ENCODE measurements at regions of chr10 and their contacts with region 1.

Region 1: GRCh38 chr10:31864834-31865518 is 63.7 kb downstream of the ARHGAP12 start:
- DNase-seq: no peak
- ATAC-seq: no peak
- H3K4me3 Mint-ChIP-seq: no peak overlapping the region
- H3K27ac Mint-ChIP-seq: no peak overlapping the region
- H3K4me1 Mint-ChIP-seq: peaks cover 27% of the 10 kb centered on the region
- H3K27me3 Mint-ChIP-seq: no peaks in the 10 kb centered on the region
- CTCF ChIP-seq: no peak

Region 2: DNA sequence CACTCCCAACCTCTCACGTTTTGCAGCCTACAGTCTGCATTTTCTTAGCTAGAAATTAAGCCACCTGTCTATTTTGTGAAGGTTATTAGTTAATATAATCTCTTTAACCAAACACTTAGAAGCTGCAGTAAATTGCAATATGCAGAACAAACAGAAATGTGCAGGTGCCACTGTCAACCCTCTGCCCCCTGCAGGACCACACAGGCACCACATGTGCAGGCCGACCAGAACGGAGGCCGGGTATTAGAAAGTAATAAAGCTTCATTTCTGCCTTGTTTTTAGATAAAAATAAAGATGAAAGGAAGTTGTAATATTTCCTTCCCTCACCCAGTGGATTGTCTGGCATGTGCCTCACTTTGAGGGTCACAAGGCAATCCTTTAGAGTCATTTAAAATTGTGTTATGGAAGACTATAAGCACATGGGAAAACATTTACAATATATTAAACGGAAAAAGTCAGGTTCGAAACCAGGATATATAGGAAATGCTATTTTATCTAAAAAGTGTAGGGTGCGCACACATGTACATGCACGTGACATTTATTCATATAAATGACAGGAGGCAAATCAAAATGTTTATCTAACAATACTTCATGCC is 94.6 kb before region 1 on chr10:
- CTCF ChIA-PET with region 1: no interaction called
- POLR2A ChIA-PET with region 1: no interaction called
- intact Hi-C with region 1: no loop called
- DNase-seq: peak; percentile 73
- ATAC-seq: peak; percentile 87
- H3K4me3 Mint-ChIP-seq: no peak overlapping the region
- H3K27ac Mint-ChIP-seq: no peak overlapping the region
- H3K4me1 Mint-ChIP-seq: peaks cover 5% of the 10 kb centered on the region
- H3K27me3 Mint-ChIP-seq: no peaks in the 10 kb centered on the region
- CTCF ChIP-seq: peak; percentile 87

Region 3: DNA sequence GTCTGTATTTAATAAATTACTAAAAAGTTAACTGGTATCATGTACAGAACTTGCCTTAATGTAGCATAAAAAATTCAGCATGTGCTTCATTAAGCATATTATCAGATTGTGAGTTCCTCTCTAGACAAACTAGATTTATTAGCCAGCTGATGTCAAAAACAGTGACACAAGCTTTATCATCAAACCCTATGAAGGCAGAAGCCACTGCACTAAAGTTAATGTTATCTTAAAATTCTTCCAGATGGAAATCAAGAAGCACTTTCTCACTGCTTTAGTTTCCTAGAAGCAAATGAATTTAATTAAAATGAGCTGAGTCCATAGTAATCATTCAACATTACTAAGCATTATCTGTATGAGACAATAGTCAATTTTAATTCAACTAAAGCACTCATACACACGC is 32.7 kb before region 1 on chr10:
- CTCF ChIA-PET with region 1: no interaction called
- POLR2A ChIA-PET with region 1: no interaction called
- intact Hi-C with region 1: no loop called
- DNase-seq: no peak
- ATAC-seq: no peak
- H3K4me3 Mint-ChIP-seq: no peak overlapping the region
- H3K27ac Mint-ChIP-seq: no peak overlapping the region
- H3K4me1 Mint-ChIP-seq: peaks cover 5% of the 10 kb centered on the region
- H3K27me3 Mint-ChIP-seq: no peaks in the 10 kb centered on the region
- CTCF ChIP-seq: no peak

Region 4: GRCh38 chr10:32005050-32005449 is 140.1 kb after region 1 on chr10:
- CTCF ChIA-PET with region 1: interaction called, 30 read pairs
- POLR2A ChIA-PET with region 1: interaction called, 3 read pairs
- intact Hi-C with region 1: loop called (anchors 2 kb)
- DNase-seq: peak; percentile 63
- ATAC-seq: peak; percentile 75
- H3K4me3 Mint-ChIP-seq: no peak overlapping the region
- H3K27ac Mint-ChIP-seq: no peak overlapping the region
- H3K4me1 Mint-ChIP-seq: peaks cover 9% of the 10 kb centered on the region
- H3K27me3 Mint-ChIP-seq: no peaks in the 10 kb centered on the region
- CTCF ChIP-seq: peak; percentile 54

Measured in activated CD8-positive, alpha-beta T cell treated with anti-CD3 and anti-CD28 coated beads for 36 hours (primary cell).